K562 (cell line): ENCODE measurements at regions of chr6 and their contacts with region 1.

Region 1: DNA sequence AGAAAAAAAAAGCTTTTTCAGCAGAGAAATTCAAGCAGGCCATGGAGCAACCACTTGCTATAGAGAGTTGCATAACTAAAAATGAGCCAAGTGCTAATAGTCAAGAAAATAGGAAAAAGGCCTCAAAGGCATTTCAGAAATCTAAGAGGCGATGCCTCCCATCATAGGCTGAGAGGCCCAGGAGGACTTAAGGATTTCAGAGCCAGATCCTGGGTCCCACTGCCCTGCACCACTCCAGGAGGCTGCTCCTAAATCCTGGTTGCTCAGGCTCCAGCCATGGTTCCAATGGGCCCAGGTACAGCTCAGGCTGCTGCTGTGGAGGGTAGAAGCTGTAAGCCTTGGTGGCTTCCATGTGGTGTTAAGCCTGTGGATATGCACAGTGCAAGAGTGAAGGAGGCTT is 5.5 kb downstream of the ZNF391 start:
- DNase-seq: no peak
- ATAC-seq: no peak
- H3K4me3 ChIP-seq: no peak overlapping the region
- H3K27ac ChIP-seq: no peak overlapping the region
- H3K4me1 ChIP-seq: peaks cover 0 to 6% of the 10 kb centered on the region in 2 experiments; a peak in 4 of 5 replicates
- H3K27me3 ChIP-seq: no peaks in the 10 kb centered on the region
- CTCF ChIP-seq: no peak
- EP300 ChIP-seq: no peak
- POLR2A ChIP-seq: no peak
- RAD21 ChIP-seq: no peak

Region 2: GRCh38 chr6:27368202-27368601 is 25.9 kb before region 1 on chr6:
- CTCF ChIA-PET with region 1: no interaction called
- POLR2A ChIA-PET with region 1: no interaction called
- in situ Hi-C with region 1: no loop called
- intact Hi-C with region 1: loop called (anchors 1 kb)
- DNase-seq: peak in 2 of 4 experiments; percentile 17
- ATAC-seq: peak; percentile 76
- H3K4me3 ChIP-seq: no peak overlapping the region
- H3K27ac ChIP-seq: no peak overlapping the region
- H3K4me1 ChIP-seq: peaks cover 0 to 5% of the 10 kb centered on the region in 2 experiments; a peak in 1 of 5 replicates
- H3K27me3 ChIP-seq: no peaks in the 10 kb centered on the region
- CTCF ChIP-seq: no peak
- EP300 ChIP-seq: no peak
- POLR2A ChIP-seq: no peak
- RAD21 ChIP-seq: no peak